ENCODE measurements at regions of chr18 and their contacts with region 1.

Region 1: GRCh38 chr18:37669991-37670534 is 104.5 kb upstream of the CELF4 start:
- DNase-seq: no peak
- H3K4me3 ChIP-seq: no peak overlapping the region
- H3K4me1 ChIP-seq: no peaks in the 10 kb centered on the region
- H3K27me3 ChIP-seq: no peaks in the 10 kb centered on the region

Region 2: GRCh38 chr18:37612524-37613252 is 57.4 kb before region 1 on chr18:
- in situ Hi-C with region 1: loop called (anchors 10 kb)
- DNase-seq: no peak
- H3K4me3 ChIP-seq: no peak overlapping the region
- H3K4me1 ChIP-seq: no peaks in the 10 kb centered on the region
- H3K27me3 ChIP-seq: no peaks in the 10 kb centered on the region

Measured in HAP-1 (cell line).